KBM-7 (cell line): ENCODE measurements at regions of chr7 and their contacts with region 1.

Region 1: DNA sequence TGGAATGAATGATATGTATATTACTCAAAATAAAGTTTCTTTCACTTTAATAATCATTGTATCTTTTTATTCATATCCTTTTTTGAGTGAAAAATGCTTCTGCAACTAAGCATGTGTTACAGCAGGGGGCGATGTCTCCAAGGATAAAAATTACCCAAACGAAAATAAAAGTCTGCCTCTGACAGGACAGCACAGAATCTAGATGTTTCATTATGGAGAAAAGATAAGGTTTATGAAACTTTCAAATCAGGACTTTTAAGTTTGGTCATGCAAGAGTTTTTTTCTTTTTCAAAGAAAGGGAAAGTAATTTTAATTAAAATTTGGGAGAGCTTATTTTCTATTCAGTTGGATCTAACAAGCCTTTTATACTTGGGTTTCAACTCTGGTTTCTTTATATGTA is 48.4 kb downstream of the TES start:
- DNase-seq: peak; percentile 53

Region 2: GRCh38 chr7:116464375-116464774 is 205.6 kb after region 1 on chr7:
- in situ Hi-C with region 1: no loop called
- DNase-seq: no peak

Region 3: GRCh38 chr7:116571037-116571436 is 312.3 kb after region 1 on chr7:
- in situ Hi-C with region 1: loop called (anchors 25 kb)
- DNase-seq: no peak

Region 4: GRCh38 chr7:116786791-116787443 is 528.2 kb after region 1 on chr7:
- in situ Hi-C with region 1: loop called (anchors 25 kb)
- DNase-seq: peak; percentile 35